ENCODE measurements at regions of chr1 and their contacts with region 1.

Region 1: GRCh38 chr1:39214998-39215873 is 10.7 kb downstream of the MACF1 start:
- DNase-seq: peak in 4 of 9 donors; percentile 37 to 48 (median 46)
- ATAC-seq: peak; percentile 84
- H3K4me3 ChIP-seq: peak overlapping the region; percentile 64
- H3K4me3 Mint-ChIP-seq: peak overlapping the region; percentile 88 to 98 (median 94)
- H3K27ac ChIP-seq: peak overlapping the region; percentile 75
- H3K27ac Mint-ChIP-seq: peak overlapping the region; percentile 84 to 97 (median 92)
- H3K4me1 ChIP-seq: peaks cover 22 to 23% of the 10 kb centered on the region in 2 donors
- H3K4me1 Mint-ChIP-seq: peaks cover 38 to 67% (median 54%) of the 10 kb centered on the region in 7 donors
- H3K27me3 ChIP-seq: no peaks in the 10 kb centered on the region
- H3K27me3 Mint-ChIP-seq: no peaks in the 10 kb centered on the region

Region 2: GRCh38 chr1:39204441-39205081 is 10.7 kb before region 1 on chr1 and contains the start of gene MACF1:
- CTCF ChIA-PET with region 1: interaction called, 19 read pairs
- POLR2A ChIA-PET with region 1: interaction called, 53 read pairs
- intact Hi-C with region 1: loop called (anchors 1 kb)
- DNase-seq: peak in 2 of 9 donors; percentile 49 to 68
- ATAC-seq: peak; percentile 39
- H3K4me3 ChIP-seq: peak within 1 kb of the TSS; percentile 61
- H3K4me3 Mint-ChIP-seq: peak within 1 kb of the TSS; percentile 83 to 99 (median 88)
- H3K27ac ChIP-seq: peak within 1 kb of the TSS; percentile 66
- H3K27ac Mint-ChIP-seq: peak within 1 kb of the TSS; percentile 82 to 98 (median 92)
- H3K4me1 ChIP-seq: peaks cover 19 to 23% of the 10 kb centered on the region in 2 donors
- H3K4me1 Mint-ChIP-seq: peaks cover 38 to 83% (median 74%) of the 10 kb centered on the region in 7 donors
- H3K27me3 ChIP-seq: no peaks in the 10 kb centered on the region
- H3K27me3 Mint-ChIP-seq: no peaks in the 10 kb centered on the region
- total RNA-seq, gene MACF1: 282 to 409 (median 335) TPM

Region 3: DNA sequence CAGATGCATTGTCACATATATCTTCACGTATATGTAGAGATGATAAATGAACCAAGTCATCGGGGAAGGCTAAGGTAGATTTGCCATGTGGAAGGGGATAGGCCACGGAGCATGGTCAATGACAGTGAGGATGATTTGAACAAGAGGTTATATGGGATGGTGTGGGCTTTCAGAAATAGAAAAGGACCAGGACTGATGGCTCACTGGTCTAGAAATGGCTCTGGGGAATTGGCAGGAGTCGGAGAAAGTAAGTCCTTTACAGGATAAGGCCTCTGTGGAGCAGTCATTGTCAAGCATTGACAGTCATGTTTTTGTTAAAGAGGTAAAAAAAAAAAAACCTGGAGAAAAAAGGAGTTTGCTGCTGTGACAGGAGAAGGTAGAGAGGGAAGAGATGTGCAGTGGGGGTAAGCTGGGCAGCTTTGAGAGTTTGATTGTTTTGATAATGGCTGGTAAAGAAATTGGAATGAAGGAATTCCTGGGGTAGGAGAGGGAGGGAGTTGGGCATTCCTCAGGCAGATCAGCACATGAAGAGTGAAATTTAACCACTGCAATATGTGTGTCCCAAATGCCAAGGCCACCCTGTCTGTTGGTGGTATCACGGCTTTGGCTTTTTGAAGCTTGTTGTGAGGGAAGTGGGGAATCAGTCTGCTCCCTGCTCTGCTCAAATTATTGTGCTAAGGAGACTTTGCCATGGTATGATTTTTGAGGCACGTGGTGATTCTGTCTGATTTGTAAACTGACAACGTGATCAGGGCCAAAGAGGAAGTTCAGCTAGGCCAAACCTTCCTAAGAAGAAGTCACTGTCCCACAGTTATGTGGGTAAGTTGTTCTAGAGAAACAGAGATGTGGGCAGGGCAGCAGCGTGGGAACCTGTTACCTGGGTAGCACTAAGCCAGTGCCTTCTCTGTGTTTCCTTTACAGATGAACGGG is 15.3 kb after region 1 on chr1:
- CTCF ChIA-PET with region 1: interaction called, 3 read pairs
- POLR2A ChIA-PET with region 1: interaction called, 6 read pairs
- intact Hi-C with region 1: loop called (anchors 1 to 2 kb)
- DNase-seq: peak in 4 of 9 donors; percentile 7 to 31 (median 14)
- ATAC-seq: peak; percentile 88
- H3K4me3 ChIP-seq: no peak overlapping the region
- H3K4me3 Mint-ChIP-seq: peak overlapping the region; percentile 24 to 73 (median 62)
- H3K27ac ChIP-seq: peak overlapping the region; percentile 52
- H3K27ac Mint-ChIP-seq: peak overlapping the region; percentile 64 to 89 (median 86)
- H3K4me1 ChIP-seq: peaks cover 41 to 46% of the 10 kb centered on the region in 2 donors
- H3K4me1 Mint-ChIP-seq: peaks cover 40 to 70% (median 64%) of the 10 kb centered on the region in 7 donors
- H3K27me3 ChIP-seq: no peaks in the 10 kb centered on the region
- H3K27me3 Mint-ChIP-seq: no peaks in the 10 kb centered on the region